Heart right ventricle (tissue), 16 donors: ENCODE measurements at regions of chr20 and their contacts with region 1.

Region 1: DNA sequence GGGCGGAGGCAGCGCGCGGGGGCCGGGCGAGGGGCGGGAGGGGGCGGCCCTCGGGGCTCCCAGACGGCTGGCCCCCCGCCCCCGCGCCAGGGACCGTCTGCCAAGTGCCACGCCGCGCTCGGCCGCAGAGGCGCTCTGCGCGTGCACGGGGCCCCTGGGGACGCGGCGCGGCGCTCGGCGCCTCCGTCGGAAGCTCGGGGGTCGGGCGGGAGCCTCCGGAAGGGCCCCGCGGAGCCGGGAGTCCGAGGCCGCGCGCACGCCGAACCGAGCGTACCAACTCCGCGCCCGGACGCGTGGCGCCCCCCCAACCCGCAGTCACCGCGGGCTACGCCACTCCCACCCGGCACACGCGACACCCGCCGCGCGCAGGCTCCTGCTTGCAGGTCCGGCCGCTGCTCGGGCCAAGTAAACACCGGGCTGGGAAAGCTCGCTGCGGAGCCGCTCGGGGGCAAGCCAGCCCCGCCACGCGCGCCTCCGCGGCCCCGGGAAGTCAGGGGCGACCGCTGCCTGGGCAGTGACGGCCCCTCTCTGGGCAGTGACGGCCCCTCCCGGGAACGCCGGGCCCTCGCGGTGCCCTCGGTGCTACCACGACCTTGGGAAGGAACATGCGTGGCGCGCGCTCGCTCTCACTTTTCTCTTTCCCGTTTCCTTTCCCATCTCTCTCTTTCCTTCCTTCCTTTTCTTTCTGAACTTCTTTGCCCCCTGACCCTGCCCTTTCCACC is 384 bp upstream of the PREX1 start:
- DNase-seq: peak; percentile 83
- ATAC-seq: peak; percentile 56 to 85 (median 72)
- H3K4me3 ChIP-seq: peak overlapping the region; percentile 24 to 84 (median 66)
- H3K27ac ChIP-seq: peak overlapping the region in 9 of 10 donors; percentile 44 to 92 (median 80)
- H3K4me1 ChIP-seq: peaks cover 0 to 63% (median 42%) of the 10 kb centered on the region in 9 donors
- H3K27me3 ChIP-seq: no peaks in the 10 kb centered on the region
- CTCF ChIP-seq: peak in 4 of 9 donors; percentile 5 to 26 (median 13)

Region 2: GRCh38 chr20:48657475-48658470 is 170.4 kb before region 1 on chr20:
- intact Hi-C with region 1: loop called in 5 of 10 experiments (anchors 5 to 10 kb)
- DNase-seq: peak in 1 of 2 donors; percentile 69
- ATAC-seq: peak; percentile 75 to 92 (median 86)
- H3K4me3 ChIP-seq: no peak overlapping the region
- H3K27ac ChIP-seq: no peak overlapping the region
- H3K4me1 ChIP-seq: peaks cover 0 to 19% (median 0%) of the 10 kb centered on the region in 9 donors
- H3K27me3 ChIP-seq: no peaks in the 10 kb centered on the region
- CTCF ChIP-seq: peak; percentile 92 to 98 (median 96)

Region 3: DNA sequence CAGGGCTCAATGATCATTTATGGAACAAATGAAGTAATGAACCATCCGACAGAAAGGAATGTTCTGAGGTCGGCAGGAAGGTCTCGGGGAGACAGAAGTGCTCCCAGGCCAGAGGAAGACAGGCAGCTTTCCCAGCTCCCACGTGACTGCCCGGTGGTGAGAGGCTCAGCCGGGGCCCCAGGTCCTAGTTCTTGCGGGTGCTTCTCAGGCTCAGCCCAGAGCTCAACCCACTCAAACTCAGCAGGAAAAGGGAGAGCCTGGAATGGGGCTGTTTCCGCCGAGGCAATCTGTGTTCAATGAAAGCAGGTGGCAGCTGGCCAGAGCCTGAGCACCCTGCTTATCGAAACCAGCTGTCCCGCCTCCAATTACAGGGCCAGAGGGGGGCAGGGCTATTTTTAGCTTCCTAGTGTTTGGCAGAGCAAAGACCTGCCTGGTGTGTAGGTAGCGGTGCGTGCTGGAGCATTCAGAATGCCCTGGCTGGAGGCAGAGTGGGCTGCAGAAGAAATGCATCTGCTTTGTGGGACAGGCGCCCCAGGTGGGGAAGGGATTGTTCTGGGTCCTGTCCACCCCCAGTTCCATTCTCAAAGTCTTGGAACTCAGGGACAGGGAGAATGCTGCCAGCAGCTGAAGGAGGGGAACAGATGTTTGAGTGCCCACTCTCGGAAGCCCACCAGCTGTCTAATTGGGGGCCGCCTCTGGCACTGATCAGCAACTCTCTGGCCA is 145.5 kb before region 1 on chr20:
- intact Hi-C with region 1: loop called in 4 of 10 experiments (anchors 5 to 10 kb)
- DNase-seq: peak; percentile 84 to 91
- ATAC-seq: peak; percentile 82 to 93 (median 88)
- H3K4me3 ChIP-seq: peak overlapping the region in 5 of 10 donors; percentile 16 to 25 (median 23)
- H3K27ac ChIP-seq: peak overlapping the region; percentile 1 to 81 (median 69)
- H3K4me1 ChIP-seq: peaks cover 24 to 65% (median 59%) of the 10 kb centered on the region in 9 donors
- H3K27me3 ChIP-seq: no peaks in the 10 kb centered on the region
- CTCF ChIP-seq: no peak

Region 4: DNA sequence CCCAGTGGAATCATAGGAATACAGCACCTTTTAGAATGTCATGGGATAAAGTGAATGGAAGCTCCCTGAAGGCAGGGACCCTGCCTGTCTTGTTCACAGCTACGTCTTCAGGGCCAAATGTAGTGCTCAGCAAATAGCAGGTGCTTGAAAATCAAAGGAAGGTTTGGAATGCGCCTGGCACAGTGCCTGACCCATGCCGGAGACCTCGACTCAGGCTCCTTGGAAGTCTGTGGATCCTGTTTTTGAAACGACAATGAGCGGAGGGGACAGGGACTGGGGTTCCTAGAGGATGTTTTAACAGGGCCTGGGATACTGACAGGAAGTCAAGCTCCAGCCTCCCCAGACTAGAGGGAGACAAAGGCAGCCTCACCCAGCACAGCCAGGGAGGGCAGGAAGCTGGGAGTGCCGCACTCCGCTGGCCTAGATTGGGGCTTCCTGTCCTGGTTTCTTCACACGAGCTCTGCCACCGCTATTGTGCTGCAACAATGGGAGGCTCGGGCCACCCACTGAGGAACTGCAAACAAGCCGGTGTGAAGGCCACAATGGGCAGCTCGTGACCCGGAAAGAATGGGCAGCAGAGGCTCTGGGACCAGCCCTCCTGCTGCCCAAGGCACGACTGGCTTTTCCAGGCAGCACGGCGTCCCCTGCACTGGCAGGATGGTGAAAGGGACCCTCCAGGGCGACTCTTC is 77.1 kb before region 1 on chr20:
- intact Hi-C with region 1: loop called in 2 of 10 experiments (anchors 5 to 10 kb)
- DNase-seq: peak; percentile 66 to 73
- ATAC-seq: peak; percentile 82 to 93 (median 90)
- H3K4me3 ChIP-seq: peak overlapping the region in 1 of 10 donors; percentile 1
- H3K27ac ChIP-seq: peak overlapping the region in 9 of 10 donors; percentile 36 to 85 (median 75)
- H3K4me1 ChIP-seq: peaks cover 0 to 82% (median 18%) of the 10 kb centered on the region in 9 donors
- H3K27me3 ChIP-seq: no peaks in the 10 kb centered on the region
- CTCF ChIP-seq: peak in 2 of 9 donors; percentile 25 to 36

Region 5: DNA sequence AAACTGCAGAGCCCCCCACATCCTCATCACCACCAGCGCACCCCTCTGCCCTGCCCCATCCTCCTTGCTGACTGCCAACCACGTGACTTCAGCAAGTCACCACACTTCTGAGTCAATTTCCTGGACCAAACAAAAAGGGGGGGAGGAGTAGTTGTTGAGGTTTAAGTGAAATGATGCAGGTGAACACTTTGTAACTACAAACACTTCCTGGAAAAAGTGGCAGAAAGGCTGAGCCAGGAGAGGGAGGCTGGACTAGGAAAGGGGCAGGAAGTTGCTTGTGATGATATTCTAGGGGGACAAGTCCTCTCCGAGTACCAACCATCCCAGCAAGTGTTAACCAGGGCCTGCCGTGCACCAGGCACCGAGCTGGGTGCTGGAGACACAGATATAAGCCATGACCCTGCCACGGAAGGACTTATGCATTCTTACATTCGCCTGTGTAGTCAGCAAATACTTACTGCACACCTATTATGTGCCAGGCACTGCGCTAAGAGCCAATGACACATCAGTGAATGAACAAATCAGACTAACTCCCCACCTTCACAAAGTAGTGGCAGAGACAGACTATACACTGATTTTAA is 67.7 kb before region 1 on chr20:
- intact Hi-C with region 1: loop called in 3 of 10 experiments (anchors 5 to 10 kb)
- DNase-seq: peak in 1 of 2 donors; percentile 44
- ATAC-seq: peak; percentile 16 to 63 (median 60)
- H3K4me3 ChIP-seq: peak overlapping the region in 1 of 10 donors; percentile 25
- H3K27ac ChIP-seq: peak overlapping the region in 9 of 10 donors; percentile 36 to 94 (median 60)
- H3K4me1 ChIP-seq: peaks cover 0 to 97% (median 29%) of the 10 kb centered on the region in 9 donors
- H3K27me3 ChIP-seq: no peaks in the 10 kb centered on the region
- CTCF ChIP-seq: no peak

Region 6: DNA sequence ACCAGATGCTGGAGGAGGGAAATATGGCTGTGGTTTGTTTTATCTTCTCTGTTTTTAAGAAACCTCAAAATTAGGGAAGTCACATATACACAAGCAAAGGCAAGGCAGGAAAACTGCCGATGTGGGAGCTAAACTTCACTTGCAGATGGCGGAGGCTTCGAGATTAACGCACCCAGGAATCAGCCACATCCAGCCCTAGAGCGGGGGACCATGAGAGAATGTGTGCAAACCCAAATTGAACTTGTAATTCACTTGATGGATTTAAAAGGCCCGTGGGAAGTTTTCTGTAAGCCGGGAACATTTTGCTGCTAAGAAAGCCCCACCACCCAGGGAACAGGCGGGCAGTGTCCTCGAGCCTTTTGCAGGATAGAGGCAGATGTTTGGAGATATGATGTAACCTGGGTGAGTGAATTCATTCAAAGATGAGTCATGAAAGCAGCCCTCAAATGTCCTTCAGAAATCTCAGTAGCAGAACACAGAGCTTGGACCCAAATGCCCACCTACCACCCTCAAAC is 40.3 kb before region 1 on chr20:
- intact Hi-C with region 1: no loop called
- DNase-seq: no peak
- ATAC-seq: peak in 1 of 8 donors; percentile 41
- H3K4me3 ChIP-seq: no peak overlapping the region
- H3K27ac ChIP-seq: peak overlapping the region in 1 of 10 donors; percentile 83
- H3K4me1 ChIP-seq: peaks cover 4 to 91% (median 19%) of the 10 kb centered on the region in 9 donors
- H3K27me3 ChIP-seq: no peaks in the 10 kb centered on the region
- CTCF ChIP-seq: no peak

Region 7: DNA sequence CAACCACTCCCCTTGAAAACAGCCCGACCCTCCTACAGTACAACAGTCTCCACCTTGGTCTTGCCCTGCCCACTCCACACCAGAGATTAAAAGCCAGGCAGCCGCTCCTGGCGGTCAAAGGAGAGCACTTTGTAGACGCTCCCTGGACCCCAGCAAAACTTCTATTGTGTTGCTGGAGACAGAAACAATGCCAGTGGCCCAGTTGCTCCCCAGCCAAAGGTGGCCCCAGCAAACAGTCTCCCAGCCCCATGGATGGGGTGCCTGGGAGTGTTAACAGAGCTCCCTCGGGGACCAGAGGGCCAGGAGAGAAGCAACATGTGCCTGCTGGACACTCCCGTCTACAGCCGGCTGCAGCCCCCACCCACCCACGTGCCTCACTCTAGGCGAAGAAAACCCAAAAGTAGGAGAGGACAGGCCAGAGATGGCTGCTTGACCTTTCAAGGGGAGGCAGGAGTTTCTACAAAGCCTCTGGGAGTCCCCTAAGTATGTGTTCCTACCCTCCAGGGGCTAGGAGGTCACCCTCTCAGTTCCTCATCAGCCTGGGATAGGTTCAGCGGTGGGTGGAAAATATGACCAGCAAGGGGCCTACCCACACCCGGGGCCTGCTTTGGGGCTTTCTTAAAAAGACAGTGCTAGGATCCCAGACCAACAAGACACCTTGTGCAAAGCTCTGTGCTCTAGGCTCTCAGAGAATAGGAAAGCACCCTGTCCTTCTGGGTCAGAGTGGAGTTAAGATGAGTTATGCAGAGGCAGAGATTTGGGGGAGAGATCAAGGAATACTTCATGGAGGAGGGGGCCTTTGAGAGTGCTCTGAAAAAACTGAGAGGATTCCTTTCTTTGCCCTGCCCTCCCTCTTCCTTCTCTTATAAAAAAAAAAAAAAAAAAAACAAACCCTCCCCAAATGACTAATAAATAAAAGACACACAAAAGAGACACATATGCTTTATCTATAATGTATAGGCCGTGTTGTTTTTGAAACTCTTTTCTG is 18.6 kb after region 1 on chr20:
- intact Hi-C with region 1: loop called in 1 of 10 experiments (anchors 1 kb)
- DNase-seq: peak in 1 of 2 donors; percentile 37
- ATAC-seq: peak in 7 of 8 donors; percentile 52 to 84 (median 73)
- H3K4me3 ChIP-seq: no peak overlapping the region
- H3K27ac ChIP-seq: peak overlapping the region in 1 of 10 donors; percentile 20
- H3K4me1 ChIP-seq: peaks cover 0 to 14% (median 9%) of the 10 kb centered on the region in 9 donors
- H3K27me3 ChIP-seq: no peaks in the 10 kb centered on the region
- CTCF ChIP-seq: no peak

Region 8: DNA sequence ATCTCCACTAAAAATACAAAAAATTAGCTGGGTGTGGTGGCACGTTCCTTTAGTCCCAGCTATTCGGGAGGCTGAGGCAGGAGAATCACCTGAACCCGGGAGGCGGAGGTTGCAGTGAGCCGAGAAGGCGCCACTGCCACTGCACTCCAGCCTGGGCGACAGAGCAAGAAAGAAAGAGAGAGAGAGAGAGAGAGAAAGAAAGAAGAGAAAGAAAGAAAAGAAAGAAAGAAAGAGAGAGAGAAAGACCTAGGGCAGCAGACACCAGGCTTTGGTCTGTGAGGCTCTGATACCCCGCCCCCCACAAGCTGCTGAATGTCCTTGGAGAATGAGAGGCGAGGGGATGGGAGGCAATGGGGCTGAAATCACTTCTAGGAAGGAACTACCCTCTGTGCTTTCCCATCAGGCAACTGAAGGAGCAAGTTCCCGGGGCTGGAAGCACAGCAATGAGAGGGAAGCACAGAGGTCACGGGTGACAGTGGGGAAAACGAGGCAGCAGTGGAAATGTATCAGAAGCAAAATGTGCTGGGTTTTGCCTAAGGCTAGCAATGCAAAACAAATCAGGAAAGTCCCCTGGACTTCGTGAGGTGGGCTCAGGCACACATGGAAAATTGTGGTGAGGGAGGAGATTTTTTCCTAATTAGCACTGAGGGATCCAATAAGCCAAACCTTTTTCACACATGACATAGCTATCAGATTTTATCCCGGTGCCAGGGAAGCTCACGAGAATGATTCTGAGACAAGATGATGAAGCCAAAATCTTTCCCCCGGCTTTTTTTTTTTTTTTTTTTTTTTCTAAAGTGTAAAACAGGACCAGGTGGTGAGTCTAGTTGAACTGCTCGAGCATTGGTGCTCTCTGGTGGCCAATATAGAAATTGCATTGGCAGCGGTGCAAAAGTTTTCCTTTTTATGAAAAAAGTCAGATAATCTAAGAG is 76.4 kb after region 1 on chr20:
- intact Hi-C with region 1: loop called in 1 of 10 experiments (anchors 5 kb)
- DNase-seq: peak; percentile 21 to 56
- ATAC-seq: peak in 7 of 8 donors; percentile 40 to 75 (median 59)
- H3K4me3 ChIP-seq: no peak overlapping the region
- H3K27ac ChIP-seq: no peak overlapping the region
- H3K4me1 ChIP-seq: peaks cover 0 to 12% (median 5%) of the 10 kb centered on the region in 9 donors
- H3K27me3 ChIP-seq: peaks cover 0 to 3% (median 0%) of the 10 kb centered on the region in 7 donors
- CTCF ChIP-seq: peak; percentile 80 to 89 (median 85)